Right ventricle myocardium inferior (tissue), 1 donor: ENCODE measurements at regions of chr2 and their contacts with region 1.

Region 1: DNA sequence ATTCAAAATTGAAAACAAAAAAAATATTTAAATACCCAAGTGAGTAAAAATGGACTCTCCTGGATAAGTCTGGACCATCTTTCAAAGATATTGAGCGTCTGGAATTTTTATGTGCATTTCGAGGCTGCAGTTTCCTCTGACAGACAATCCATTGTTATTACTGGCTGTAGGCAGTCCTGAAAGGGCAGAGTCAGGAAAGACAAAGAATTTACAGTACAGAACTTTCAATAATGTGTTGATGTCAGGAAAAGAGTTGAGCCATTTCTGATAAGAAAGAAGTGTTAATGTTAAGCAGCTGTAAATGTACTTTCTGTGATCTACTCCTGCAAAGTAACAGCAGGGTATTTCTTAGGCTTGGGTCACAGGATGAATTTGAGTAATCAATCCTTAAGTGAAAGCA is 29.8 kb downstream of the TSPYL6 start:
- DNase-seq: no peak
- ATAC-seq: peak; percentile 16

Region 2: DNA sequence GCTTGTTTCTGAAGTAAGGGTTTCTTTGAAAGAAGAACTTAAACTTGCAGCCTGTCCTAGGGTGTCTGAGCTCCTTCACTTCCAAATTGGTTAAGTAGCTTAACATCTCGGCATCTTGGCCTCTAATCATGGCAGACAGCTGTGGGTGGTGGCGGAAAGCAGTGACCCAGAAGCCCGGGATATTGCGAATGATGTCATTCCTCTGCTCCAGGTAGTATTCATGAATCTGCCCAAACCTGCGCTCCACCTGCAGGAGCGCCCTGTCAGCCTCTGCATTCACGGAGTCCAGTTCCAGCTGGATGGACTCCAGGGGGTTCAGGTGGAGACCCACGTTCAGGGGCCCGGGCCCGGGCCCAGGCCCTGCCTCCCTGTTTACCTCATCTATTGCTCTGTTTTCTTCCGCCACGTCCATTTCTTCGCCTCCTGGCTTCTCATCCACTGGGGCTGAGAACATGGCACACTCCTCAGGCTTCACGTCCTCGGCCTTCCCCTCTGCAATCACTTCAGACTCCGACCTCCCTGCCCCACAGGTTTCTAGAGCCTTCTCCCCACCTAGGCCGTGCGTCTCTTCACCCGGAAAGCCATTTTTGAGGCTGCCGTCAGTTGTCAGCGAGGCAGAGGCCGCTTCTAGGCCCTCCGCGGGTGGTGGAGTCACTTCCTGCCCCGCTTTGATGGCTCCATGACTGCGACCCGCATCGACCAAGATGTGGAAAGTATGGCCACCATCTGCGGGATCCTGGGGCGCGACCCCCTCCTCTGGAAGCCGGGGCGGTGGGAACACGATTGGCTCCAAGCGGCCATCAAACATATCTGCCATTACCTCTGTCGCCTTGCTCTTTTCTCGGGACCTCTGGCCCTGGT is 29.2 kb after region 1 on chr2:
- intact Hi-C with region 1: loop called (anchors 2 kb)
- DNase-seq: no peak
- ATAC-seq: no peak